ENCODE measurements at regions of chrX and their contacts with region 1.

Region 1: DNA sequence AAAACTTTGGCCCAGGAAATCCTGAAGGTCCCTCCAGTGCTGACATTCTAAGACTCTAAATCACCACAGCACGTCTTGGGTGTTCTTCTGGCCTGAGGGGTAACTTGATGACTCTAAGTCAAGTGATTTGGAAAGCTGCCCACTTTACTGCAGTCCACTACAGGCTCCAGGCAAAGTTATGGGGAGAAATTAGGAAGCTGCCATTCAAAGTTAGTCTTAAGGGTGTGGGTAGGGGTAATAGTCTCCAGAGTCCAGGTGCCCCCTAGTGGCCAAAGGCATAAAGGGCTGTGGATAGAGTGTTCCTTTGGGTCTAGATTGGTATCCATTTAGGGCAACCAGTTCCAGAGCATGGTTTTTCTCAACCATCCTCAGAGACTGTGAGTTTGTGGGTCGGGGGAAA is 38.7 kb upstream of the SLC16A2 start:
- DNase-seq: peak; percentile 79 to 80
- ATAC-seq: peak; percentile 81
- H3K4me3 ChIP-seq: no peak overlapping the region
- H3K27ac ChIP-seq: no peak overlapping the region
- H3K4me1 ChIP-seq: no peaks in the 10 kb centered on the region
- H3K27me3 ChIP-seq: no peaks in the 10 kb centered on the region

Region 2: DNA sequence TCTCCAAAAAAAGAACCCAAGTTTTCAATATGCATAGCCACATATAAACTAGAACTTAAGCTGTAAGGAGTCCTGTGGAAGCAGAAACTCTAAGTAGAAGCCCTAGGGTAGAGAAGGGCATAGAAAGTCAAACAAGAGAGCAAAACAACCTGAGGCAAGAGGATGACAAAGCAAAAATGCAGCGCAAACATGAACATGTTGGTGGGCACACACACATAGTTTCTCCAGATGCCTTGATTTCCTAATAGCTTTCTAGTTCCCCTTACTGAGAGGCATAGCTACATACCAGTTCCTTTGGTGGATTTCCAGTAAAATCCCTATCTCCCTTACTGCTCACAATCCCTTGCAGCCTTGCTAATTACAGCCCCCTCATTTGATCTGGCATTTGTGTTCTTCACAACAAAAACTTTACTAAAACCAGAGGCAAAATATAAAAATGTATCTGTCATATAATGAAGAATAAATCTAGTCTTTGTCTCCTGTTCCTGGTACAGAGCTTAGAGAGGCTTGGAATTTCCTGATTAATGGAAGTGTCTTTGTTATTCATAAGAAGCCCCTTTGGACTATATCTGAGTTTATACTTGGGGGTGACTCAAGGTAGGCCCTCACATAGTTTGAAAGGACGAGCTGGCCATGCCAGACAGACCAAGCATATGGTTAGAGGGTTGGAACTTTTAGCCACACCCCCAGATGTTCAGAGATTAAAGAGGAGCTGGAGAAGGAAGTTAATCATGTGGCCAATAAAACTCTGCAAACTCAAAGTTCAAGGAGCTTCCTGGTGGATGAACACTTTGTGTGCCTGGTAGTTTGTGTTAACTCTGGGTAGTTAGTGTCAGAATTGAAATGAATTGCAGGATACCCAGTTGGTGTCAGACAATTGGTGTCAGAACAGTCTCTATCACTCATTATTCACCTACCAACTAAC is 131.3 kb before region 1 on chrX:
- intact Hi-C with region 1: no loop called
- DNase-seq: no peak
- ATAC-seq: no peak
- H3K4me3 ChIP-seq: no peak overlapping the region
- H3K27ac ChIP-seq: no peak overlapping the region
- H3K4me1 ChIP-seq: peaks cover 0 to 9% of the 10 kb centered on the region in 2 donors
- H3K27me3 ChIP-seq: no peaks in the 10 kb centered on the region

Region 3: DNA sequence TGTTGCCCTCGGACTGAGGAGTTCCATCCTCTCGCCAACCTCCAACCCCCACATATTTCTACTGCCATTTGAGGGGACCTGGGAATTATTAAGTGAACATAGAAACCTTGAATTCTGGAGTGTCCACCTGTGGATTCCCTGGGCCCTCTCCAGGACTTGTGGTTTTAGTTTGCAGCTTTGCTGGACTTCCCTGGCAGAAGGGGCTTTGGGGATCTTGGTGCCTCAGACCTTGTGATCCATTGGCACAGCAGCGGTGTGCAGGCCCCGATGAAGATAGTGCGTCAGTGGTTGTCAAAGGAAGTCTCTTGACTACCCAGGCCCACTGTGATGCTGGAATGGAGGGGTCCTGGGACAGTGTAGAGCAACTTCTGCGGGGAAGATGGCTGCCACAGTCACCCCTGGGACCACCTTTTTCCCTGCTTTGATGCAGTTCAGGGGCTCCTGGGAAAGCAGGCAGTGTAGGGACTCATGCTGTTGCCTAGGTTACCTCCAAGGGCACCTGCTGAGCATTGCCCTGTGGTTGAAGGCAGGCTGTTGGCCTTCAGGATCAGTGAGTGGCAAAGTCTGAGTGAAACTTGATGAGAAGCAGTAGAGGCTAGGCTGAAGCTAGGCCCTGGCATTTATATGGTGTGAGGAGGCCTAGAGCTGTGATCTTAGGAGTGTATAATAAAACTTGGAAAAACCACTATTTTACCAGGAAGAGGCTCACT is 40.8 kb after region 1 on chrX:
- intact Hi-C with region 1: no loop called
- DNase-seq: no peak
- ATAC-seq: no peak
- H3K4me3 ChIP-seq: no peak overlapping the region
- H3K27ac ChIP-seq: no peak overlapping the region
- H3K4me1 ChIP-seq: no peaks in the 10 kb centered on the region
- H3K27me3 ChIP-seq: no peaks in the 10 kb centered on the region

Region 4: DNA sequence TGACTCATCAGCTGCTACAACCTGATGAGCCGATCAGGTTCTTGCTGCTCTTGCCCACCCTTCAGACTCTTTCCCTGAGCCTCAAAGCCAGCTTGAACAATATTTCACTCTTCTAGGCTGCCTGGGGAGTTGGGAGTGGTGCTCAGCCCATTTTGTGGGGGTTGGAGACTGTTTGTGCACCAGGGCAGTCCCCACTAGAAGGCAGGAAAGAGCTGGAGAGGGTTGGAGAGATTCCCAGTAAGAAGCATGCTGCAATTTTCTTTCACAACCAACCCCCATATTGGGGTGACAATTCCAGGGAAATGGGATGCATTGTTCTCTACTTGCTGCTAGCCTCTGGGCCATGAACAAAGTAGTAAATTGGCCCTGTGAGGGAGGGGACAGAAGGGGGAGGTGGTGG is 82.8 kb after region 1 on chrX:
- intact Hi-C with region 1: loop called in 1 of 2 experiments (anchors 10 kb)
- DNase-seq: no peak
- ATAC-seq: no peak
- H3K4me3 ChIP-seq: no peak overlapping the region
- H3K27ac ChIP-seq: no peak overlapping the region
- H3K4me1 ChIP-seq: no peaks in the 10 kb centered on the region
- H3K27me3 ChIP-seq: no peaks in the 10 kb centered on the region

Region 5: GRCh38 chrX:74536152-74536831 is 153.7 kb after region 1 on chrX:
- intact Hi-C with region 1: loop called in 1 of 2 experiments (anchors 10 kb)
- DNase-seq: peak; percentile 94 to 95
- ATAC-seq: peak; percentile 90
- H3K4me3 ChIP-seq: peak overlapping the region in 1 of 2 donors; percentile 49
- H3K27ac ChIP-seq: peak overlapping the region in 1 of 2 donors; percentile 83
- H3K4me1 ChIP-seq: no peaks in the 10 kb centered on the region
- H3K27me3 ChIP-seq: no peaks in the 10 kb centered on the region

Region 6: GRCh38 chrX:74550295-74550802 is 167.7 kb after region 1 on chrX:
- intact Hi-C with region 1: loop called (anchors 2 to 10 kb)
- DNase-seq: peak; percentile 89 to 95
- ATAC-seq: peak; percentile 94
- H3K4me3 ChIP-seq: no peak overlapping the region
- H3K27ac ChIP-seq: no peak overlapping the region
- H3K4me1 ChIP-seq: no peaks in the 10 kb centered on the region
- H3K27me3 ChIP-seq: peaks cover 0 to 1% of the 10 kb centered on the region in 2 donors

Measured in aorta (tissue), 5 donors.